WTC11 (cell line): ENCODE measurements at regions of chr17 and their contacts with region 1.

Region 1: DNA sequence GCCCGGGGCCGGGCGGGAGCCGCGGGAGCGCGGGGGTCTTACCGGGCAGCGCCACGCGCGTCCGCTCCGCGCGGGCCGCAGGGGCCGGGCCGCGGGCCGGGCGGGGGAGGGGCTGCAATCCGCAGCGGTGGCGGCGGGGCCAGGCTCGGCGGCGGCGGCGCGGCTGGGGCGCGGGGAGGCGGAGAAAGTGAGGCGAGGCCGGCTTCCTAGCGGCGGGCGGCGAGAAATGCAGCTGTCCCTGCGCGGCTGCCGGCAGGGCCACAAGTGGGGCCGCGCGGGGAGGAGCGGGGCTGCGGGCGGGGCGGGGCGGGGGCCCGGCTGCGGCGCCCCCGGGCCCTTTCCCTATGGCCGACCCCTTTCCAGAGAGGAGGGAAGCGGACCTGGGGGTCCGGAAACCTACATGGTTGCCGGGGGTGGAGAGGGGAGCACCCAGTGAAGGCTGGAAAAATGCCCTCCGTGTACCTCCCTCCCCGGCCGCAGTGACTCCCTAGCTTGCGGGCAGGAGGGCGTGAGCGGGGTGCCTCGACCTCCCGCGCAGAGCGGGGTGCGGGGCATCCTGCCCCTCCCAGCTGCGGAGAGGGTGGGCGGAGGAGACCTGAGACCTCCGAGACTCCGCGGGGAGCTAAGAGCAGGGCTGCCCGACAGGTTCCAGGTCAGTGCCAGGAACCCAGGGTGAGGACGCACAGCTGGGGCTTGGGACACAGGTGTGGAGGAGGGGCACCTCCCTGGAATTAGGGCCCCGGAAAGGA is at the start of gene CUEDC1:
- DNase-seq: peak; percentile 74
- ATAC-seq: peak; percentile 61
- H3K4me3 Mint-ChIP-seq: peak within 1 kb of the TSS; percentile 74
- H3K27ac Mint-ChIP-seq: 0 out of 2 replicates have a peak within 1 kb of the TSS, but pooled peaks have one; percentile 6
- H3K4me1 Mint-ChIP-seq: peaks cover 53% of the 10 kb centered on the region
- H3K27me3 Mint-ChIP-seq: peaks cover 48% of the 10 kb centered on the region
- CTCF ChIP-seq: no peak
- total RNA-seq, gene CUEDC1: 6.5 to 12.2 TPM (median 9.4 TPM) in 3 replicates

Region 2: DNA sequence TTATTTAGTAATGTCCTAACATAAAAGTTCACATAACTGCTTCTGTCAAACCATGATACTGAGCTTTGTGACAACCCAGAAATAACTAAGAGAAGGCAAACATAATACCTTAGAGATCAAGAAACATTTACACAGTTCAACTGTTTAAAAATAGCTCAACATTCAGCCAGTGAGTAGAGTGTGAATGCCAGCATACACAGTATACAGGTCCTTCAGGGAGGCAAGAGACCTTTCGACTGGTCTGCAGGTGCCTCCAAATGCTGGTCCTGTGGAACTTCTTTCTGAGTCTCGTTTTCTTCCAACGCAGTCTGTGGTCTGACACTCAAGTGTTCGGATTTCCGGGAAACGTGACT is 115.8 kb before region 1 on chr17:
- CTCF ChIA-PET with region 1: no interaction called
- POLR2A ChIA-PET with region 1: no interaction called
- DNase-seq: no peak
- ATAC-seq: no peak
- H3K4me3 Mint-ChIP-seq: no peak overlapping the region
- H3K27ac Mint-ChIP-seq: no peak overlapping the region
- H3K4me1 Mint-ChIP-seq: no peaks in the 10 kb centered on the region; the same call in 1 of the 2 replicates
- H3K27me3 Mint-ChIP-seq: no peaks in the 10 kb centered on the region
- CTCF ChIP-seq: no peak

Region 3: DNA sequence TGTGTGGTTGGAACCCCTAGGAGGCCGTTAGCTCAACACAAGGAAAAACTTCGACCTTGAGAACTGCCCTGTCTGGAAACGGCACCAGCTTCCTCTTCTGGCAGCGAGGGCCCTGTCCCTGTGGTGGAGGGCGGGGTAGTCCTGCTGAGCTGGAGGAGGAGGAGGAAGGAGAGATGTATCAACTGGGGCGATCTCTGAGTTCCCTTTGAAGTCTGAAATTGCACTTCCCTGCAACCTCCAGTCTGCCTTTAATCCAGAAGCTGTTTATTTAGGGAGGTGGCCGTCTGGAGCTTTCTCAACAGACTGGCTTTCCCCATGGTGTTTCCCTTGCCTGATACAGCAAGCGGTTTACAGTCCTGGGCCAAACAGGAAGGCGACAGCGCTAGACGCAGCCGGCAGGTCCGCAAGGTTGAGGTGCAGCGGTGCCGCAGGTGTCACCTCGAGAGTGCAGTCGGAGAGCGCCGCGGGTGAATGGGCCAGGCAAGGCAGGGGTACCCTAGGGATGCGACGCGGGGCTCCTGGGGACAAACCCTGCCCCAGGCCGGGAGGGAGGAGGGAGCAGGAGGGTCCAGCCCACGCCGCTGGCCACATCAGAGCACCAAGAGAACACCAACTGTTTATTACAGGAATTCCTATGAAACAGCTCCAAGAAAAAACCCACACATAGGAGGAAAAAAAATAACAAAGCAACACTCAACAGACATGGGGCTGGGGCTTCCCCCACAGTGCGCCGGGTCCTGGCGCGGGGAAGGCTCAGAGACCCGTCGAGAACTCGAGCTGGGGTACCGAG is 94.2 kb before region 1 on chr17:
- CTCF ChIA-PET with region 1: interaction called, 54 read pairs
- POLR2A ChIA-PET with region 1: no interaction called
- DNase-seq: peak; percentile 58
- ATAC-seq: peak; percentile 34
- H3K4me3 Mint-ChIP-seq: peak overlapping the region; percentile 79
- H3K27ac Mint-ChIP-seq: no peak overlapping the region
- H3K4me1 Mint-ChIP-seq: peaks cover 55% of the 10 kb centered on the region
- H3K27me3 Mint-ChIP-seq: peaks cover 40% of the 10 kb centered on the region
- CTCF ChIP-seq: no peak

Region 4: GRCh38 chr17:57875309-57876115 is 79.8 kb before region 1 on chr17:
- CTCF ChIA-PET with region 1: interaction called, 14 read pairs
- POLR2A ChIA-PET with region 1: interaction called, 3 read pairs
- DNase-seq: peak; percentile 69
- ATAC-seq: peak; percentile 63
- H3K4me3 Mint-ChIP-seq: peak overlapping the region; percentile 46
- H3K27ac Mint-ChIP-seq: peak overlapping the region; percentile 87
- H3K4me1 Mint-ChIP-seq: peaks cover 82% of the 10 kb centered on the region
- H3K27me3 Mint-ChIP-seq: peaks cover 10% of the 10 kb centered on the region; the same call in 1 of the 2 replicates
- CTCF ChIP-seq: no peak

Region 5: GRCh38 chr17:57902800-57903759 is 52.3 kb before region 1 on chr17:
- CTCF ChIA-PET with region 1: interaction called, 21 read pairs
- POLR2A ChIA-PET with region 1: interaction called, 3 read pairs
- DNase-seq: no peak
- ATAC-seq: no peak
- H3K4me3 Mint-ChIP-seq: no peak overlapping the region
- H3K27ac Mint-ChIP-seq: peak overlapping the region; percentile 71; the same call in 1 of the 2 replicates
- H3K4me1 Mint-ChIP-seq: peaks cover 59% of the 10 kb centered on the region
- H3K27me3 Mint-ChIP-seq: no peaks in the 10 kb centered on the region
- CTCF ChIP-seq: no peak

Region 6: GRCh38 chr17:57939797-57940196 is 15.6 kb before region 1 on chr17:
- CTCF ChIA-PET with region 1: interaction called, 12 read pairs
- POLR2A ChIA-PET with region 1: interaction called, 6 read pairs
- DNase-seq: no peak
- ATAC-seq: no peak
- H3K4me3 Mint-ChIP-seq: no peak overlapping the region
- H3K27ac Mint-ChIP-seq: no peak overlapping the region
- H3K4me1 Mint-ChIP-seq: peaks cover 25% of the 10 kb centered on the region
- H3K27me3 Mint-ChIP-seq: no peaks in the 10 kb centered on the region
- CTCF ChIP-seq: no peak